Activated CD8-positive, alpha-beta T cell treated with anti-CD3 and anti-CD28 coated beads, Interleukin-2, amount 10 ng/mL, durations not matched to agents 7 days and 5 days (primary cell): ENCODE measurements at regions of chr6 and their contacts with region 1.

Region 1: GRCh38 chr6:26234421-26235296 is 130.3 kb upstream of the BTN3A2 start:
- DNase-seq: peak; percentile 89
- ATAC-seq: peak; percentile 64
- H3K4me3 Mint-ChIP-seq: peak overlapping the region; percentile 78
- H3K27ac Mint-ChIP-seq: peak overlapping the region; percentile 99
- H3K4me1 Mint-ChIP-seq: peaks cover 41% of the 10 kb centered on the region
- H3K27me3 Mint-ChIP-seq: no peaks in the 10 kb centered on the region

Region 2: GRCh38 chr6:26025894-26026832 is 208.5 kb before region 1 on chr6:
- CTCF ChIA-PET with region 1: interaction called, 5 read pairs
- POLR2A ChIA-PET with region 1: interaction called, 109 read pairs
- DNase-seq: peak; percentile 97
- ATAC-seq: peak; percentile 42
- H3K4me3 Mint-ChIP-seq: peak overlapping the region; percentile 86
- H3K27ac Mint-ChIP-seq: peak overlapping the region; percentile 99
- H3K4me1 Mint-ChIP-seq: peaks cover 86% of the 10 kb centered on the region
- H3K27me3 Mint-ChIP-seq: peaks cover 3% of the 10 kb centered on the region

Region 3: GRCh38 chr6:26103770-26104456 is 130.7 kb before region 1 on chr6:
- CTCF ChIA-PET with region 1: no interaction called
- POLR2A ChIA-PET with region 1: interaction called, 18 read pairs
- DNase-seq: peak; percentile 93
- ATAC-seq: peak; percentile 89
- H3K4me3 Mint-ChIP-seq: peak overlapping the region; percentile 85
- H3K27ac Mint-ChIP-seq: peak overlapping the region; percentile 98
- H3K4me1 Mint-ChIP-seq: peaks cover 26% of the 10 kb centered on the region
- H3K27me3 Mint-ChIP-seq: peaks cover 2% of the 10 kb centered on the region

Region 4: DNA sequence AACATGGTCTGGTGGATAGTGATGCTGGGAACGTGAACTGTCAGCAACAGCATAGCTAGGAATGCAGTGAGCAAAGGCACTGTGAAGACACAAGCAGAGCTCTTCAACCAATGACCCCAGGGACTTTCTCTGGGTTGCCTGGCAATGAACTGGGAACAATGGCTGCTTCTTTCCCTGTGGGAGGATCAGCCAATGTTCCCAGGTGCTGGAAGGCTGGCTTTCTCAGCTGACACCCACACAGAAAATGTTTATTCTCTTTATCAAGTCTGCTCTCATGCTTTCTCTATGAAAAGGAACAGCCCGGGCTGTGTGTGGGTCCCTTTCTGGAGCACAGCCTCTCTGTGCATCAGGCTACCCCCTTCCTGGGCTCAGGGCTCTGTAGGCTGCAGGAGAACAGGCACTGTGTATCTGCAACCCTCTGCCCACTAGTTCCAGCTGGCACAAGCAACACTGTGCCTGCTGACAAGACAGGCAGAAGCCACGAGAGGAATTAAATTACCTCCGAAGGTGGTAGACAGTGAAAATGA is 93.2 kb before region 1 on chr6:
- CTCF ChIA-PET with region 1: no interaction called
- POLR2A ChIA-PET with region 1: no interaction called
- DNase-seq: no peak
- ATAC-seq: no peak
- H3K4me3 Mint-ChIP-seq: no peak overlapping the region
- H3K27ac Mint-ChIP-seq: no peak overlapping the region
- H3K4me1 Mint-ChIP-seq: peaks cover 5% of the 10 kb centered on the region
- H3K27me3 Mint-ChIP-seq: no peaks in the 10 kb centered on the region

Region 5: GRCh38 chr6:26204332-26205165 is 30.1 kb before region 1 on chr6:
- CTCF ChIA-PET with region 1: interaction called, 8 read pairs
- POLR2A ChIA-PET with region 1: interaction called, 1,100 read pairs
- DNase-seq: peak; percentile 95
- ATAC-seq: peak; percentile 66
- H3K4me3 Mint-ChIP-seq: no peak overlapping the region
- H3K27ac Mint-ChIP-seq: no peak overlapping the region
- H3K4me1 Mint-ChIP-seq: peaks cover 41% of the 10 kb centered on the region
- H3K27me3 Mint-ChIP-seq: no peaks in the 10 kb centered on the region

Region 6: DNA sequence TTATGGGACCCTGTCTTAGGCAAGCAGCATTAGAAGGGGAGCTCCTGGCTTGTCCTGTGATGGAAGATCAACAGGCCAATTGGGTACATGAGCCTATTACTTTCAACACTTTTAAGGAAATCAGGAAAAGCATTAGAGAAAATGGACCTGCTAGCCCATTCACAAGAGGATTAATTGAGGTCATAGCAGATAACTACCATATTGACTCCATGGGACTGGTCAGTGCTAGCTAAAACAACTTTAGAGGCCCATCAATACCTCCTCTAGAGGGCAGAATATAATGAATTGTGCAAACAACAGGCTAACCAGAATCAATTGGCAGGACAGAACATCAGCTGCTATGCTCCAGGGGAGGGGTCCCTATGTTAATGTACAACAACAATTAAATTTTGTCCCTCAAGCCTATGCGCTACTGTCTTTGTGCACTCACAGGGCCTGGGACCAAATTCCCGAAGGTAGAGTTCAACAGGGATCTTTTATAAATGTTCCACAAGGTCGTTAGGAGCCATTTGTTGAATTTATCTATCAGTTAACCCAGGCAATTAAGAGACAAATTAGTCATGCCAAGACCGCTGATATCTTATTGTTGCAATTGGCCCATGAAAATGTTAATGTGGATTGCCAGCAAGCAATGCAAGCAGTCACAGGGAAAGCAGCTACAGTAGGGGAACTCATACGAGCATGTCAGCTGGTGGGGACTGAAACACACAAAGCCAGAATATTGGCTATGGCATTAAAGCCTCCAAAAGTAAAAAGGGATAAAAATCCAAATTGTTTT is 23.7 kb after region 1 on chr6:
- CTCF ChIA-PET with region 1: no interaction called
- POLR2A ChIA-PET with region 1: interaction called, 29 read pairs
- DNase-seq: no peak
- ATAC-seq: no peak
- H3K4me3 Mint-ChIP-seq: no peak overlapping the region
- H3K27ac Mint-ChIP-seq: no peak overlapping the region
- H3K4me1 Mint-ChIP-seq: peaks cover 19% of the 10 kb centered on the region
- H3K27me3 Mint-ChIP-seq: no peaks in the 10 kb centered on the region

Region 7: GRCh38 chr6:26354162-26354561 is 119.5 kb after region 1 on chr6:
- CTCF ChIA-PET with region 1: no interaction called
- POLR2A ChIA-PET with region 1: no interaction called
- DNase-seq: no peak
- ATAC-seq: no peak
- H3K4me3 Mint-ChIP-seq: no peak overlapping the region
- H3K27ac Mint-ChIP-seq: no peak overlapping the region
- H3K4me1 Mint-ChIP-seq: peaks cover 9% of the 10 kb centered on the region
- H3K27me3 Mint-ChIP-seq: peaks cover 2% of the 10 kb centered on the region

Region 8: GRCh38 chr6:27146706-27147505 is 912.2 kb after region 1 on chr6:
- CTCF ChIA-PET with region 1: no interaction called
- POLR2A ChIA-PET with region 1: interaction called, 39 read pairs
- DNase-seq: peak; percentile 91
- ATAC-seq: peak; percentile 64
- H3K4me3 Mint-ChIP-seq: no peak overlapping the region
- H3K27ac Mint-ChIP-seq: no peak overlapping the region
- H3K4me1 Mint-ChIP-seq: peaks cover 35% of the 10 kb centered on the region
- H3K27me3 Mint-ChIP-seq: no peaks in the 10 kb centered on the region

Region 9: GRCh38 chr6:27864906-27865849 is 1630.5 kb after region 1 on chr6:
- CTCF ChIA-PET with region 1: no interaction called
- POLR2A ChIA-PET with region 1: interaction called, 57 read pairs
- DNase-seq: peak; percentile 90
- ATAC-seq: peak; percentile 57
- H3K4me3 Mint-ChIP-seq: peak overlapping the region; percentile 87
- H3K27ac Mint-ChIP-seq: peak overlapping the region; percentile 99
- H3K4me1 Mint-ChIP-seq: peaks cover 55% of the 10 kb centered on the region
- H3K27me3 Mint-ChIP-seq: no peaks in the 10 kb centered on the region